Activated T-helper 1 cell treated with anti-CD3 and anti-CD28 coated beads, Interleukin-12 subunit alpha, Interleukin-12 subunit beta, Interleukin-2, Interleukin-4 antibody, amounts not matched to agents 30 ng/mL and 10 ng/mL and 1 ng/mL, durations not matched to agents 14 hours and 24 hours and 36 hours (primary cell): ENCODE measurements at regions of chr17 and their contacts with region 1.

Region 1: DNA sequence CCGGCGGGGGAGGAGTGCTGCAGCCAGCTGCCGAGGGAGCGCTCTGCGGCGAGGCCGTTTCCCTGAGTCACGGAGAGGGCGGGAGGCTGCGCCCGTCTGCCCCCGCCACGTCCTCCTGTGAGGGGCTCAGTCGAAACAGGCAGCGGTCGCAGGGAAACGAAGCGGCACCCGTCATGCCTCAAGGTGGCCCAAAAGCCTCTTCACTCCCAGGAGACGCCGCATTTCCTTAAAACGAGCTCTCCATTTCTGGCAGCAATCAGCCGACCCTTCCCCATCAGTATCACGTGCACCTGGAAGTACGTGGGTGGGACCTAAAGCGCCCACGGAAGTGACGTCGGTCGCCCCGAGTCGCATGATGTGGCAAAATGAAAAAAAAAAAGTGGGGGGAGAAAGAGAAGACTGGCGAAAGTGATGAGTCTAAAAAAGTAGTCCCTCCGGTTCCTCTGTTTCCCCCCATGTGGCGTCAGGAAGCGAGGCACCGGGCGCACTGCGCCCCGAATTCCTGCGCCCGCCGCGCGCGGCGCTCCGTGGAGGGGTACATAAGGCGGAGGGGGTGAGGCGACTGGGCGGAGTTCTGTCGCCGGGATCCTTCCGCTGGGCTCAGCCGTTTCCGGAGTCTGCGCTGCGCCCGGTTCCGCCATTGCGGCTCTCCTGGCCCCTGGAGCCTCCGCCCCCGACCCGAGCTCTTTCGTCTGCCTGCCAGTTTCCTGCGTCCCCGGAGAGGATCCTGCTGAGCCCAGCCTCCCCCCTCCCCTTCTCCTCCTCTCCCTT is at the start of gene CLTC:
- DNase-seq: peak; percentile 90
- H3K4me3 Mint-ChIP-seq: peak within 1 kb of the TSS; percentile 97
- H3K27ac Mint-ChIP-seq: peak within 1 kb of the TSS; percentile 100
- H3K4me1 Mint-ChIP-seq: peaks cover 57% of the 10 kb centered on the region
- H3K27me3 Mint-ChIP-seq: no peaks in the 10 kb centered on the region
- total RNA-seq, gene CLTC: 176 and 186 TPM in 2 replicates

Region 2: GRCh38 chr17:59155439-59156182 is 463.9 kb before region 1 on chr17 and contains the start of gene PRR11:
- intact Hi-C with region 1: loop called (anchors 1 kb)
- DNase-seq: peak; percentile 94
- H3K4me3 Mint-ChIP-seq: no peak within 1 kb of the TSS
- H3K27ac Mint-ChIP-seq: no peak within 1 kb of the TSS
- H3K4me1 Mint-ChIP-seq: peaks cover 63% of the 10 kb centered on the region
- H3K27me3 Mint-ChIP-seq: no peaks in the 10 kb centered on the region
- total RNA-seq, gene PRR11: 29.4 and 32.7 TPM in 2 replicates

Region 3: GRCh38 chr17:59601130-59601529 is 18.3 kb before region 1 on chr17:
- intact Hi-C with region 1: loop called (anchors 2 kb)
- DNase-seq: no peak
- H3K4me3 Mint-ChIP-seq: no peak overlapping the region
- H3K27ac Mint-ChIP-seq: peak overlapping the region; percentile 3
- H3K4me1 Mint-ChIP-seq: peaks cover 14% of the 10 kb centered on the region
- H3K27me3 Mint-ChIP-seq: no peaks in the 10 kb centered on the region

Region 4: DNA sequence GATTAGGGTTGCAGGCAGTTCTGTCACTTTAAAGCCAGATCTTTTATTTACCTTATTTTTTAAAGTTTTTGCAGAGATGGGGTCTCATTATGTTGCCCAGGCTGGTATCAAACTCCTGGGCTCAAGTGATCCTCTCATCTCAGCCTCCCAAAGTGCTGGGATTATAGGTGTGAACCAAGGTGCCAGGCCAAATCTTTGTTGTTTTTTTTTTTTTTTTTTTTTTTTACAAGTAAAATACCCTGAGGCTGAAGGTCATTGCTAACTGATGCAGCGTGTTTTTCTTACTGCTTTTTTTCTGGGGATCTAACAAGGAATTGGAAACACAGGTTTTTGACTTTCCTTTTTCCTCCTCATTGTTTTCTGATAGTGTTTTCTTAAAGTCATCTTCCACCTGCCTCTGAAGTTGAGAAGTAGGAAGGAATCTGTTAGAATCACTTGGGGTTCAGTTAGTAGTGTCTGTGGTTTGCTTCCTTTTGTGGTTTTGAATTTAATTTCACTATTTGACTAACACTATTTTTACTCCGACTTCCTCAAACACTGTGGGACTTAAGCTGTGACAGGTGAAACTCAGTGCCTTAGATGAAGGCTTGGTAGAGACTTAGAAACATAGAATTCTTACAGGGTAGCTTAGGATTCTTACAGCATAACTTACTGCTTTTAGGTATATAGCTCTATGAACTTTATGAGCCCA is 22.5 kb after region 1 on chr17:
- intact Hi-C with region 1: loop called (anchors 1 kb)
- DNase-seq: peak; percentile 3
- H3K4me3 Mint-ChIP-seq: peak overlapping the region; percentile 16
- H3K27ac Mint-ChIP-seq: peak overlapping the region; percentile 72
- H3K4me1 Mint-ChIP-seq: peaks cover 50% of the 10 kb centered on the region
- H3K27me3 Mint-ChIP-seq: no peaks in the 10 kb centered on the region

Region 5: DNA sequence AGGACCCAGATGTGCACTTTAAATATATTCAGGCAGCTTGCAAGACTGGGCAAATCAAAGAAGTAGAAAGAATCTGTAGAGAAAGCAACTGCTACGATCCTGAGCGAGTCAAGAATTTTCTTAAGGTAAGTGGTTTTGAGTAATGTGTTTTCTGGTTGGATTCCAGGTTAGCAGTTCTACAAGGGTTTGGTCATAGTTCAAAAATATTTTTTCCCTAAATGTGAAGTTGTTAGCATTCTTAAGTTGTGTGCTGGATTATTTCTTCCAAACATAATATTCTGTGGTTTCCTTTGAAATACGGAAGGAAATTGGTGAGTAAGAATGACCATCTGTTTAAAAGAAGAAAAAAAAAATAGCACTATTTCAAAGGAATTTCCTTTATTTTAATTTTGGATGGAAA is 49.3 kb after region 1 on chr17:
- intact Hi-C with region 1: no loop called
- DNase-seq: no peak
- H3K4me3 Mint-ChIP-seq: no peak overlapping the region
- H3K27ac Mint-ChIP-seq: peak overlapping the region; percentile 34
- H3K4me1 Mint-ChIP-seq: peaks cover 28% of the 10 kb centered on the region
- H3K27me3 Mint-ChIP-seq: no peaks in the 10 kb centered on the region

Region 6: GRCh38 chr17:59892924-59893676 is 273.6 kb after region 1 on chr17 and contains the starts of genes RPS6KB1 and TUBD1:
- intact Hi-C with region 1: loop called (anchors 1 kb)
- DNase-seq: peak; percentile 98
- H3K4me3 Mint-ChIP-seq: peak within 1 kb of the TSS; percentile 100
- H3K27ac Mint-ChIP-seq: peak within 1 kb of the TSS; percentile 99
- H3K4me1 Mint-ChIP-seq: peaks cover 58% of the 10 kb centered on the region
- H3K27me3 Mint-ChIP-seq: peaks cover 3% of the 10 kb centered on the region
- total RNA-seq, gene RPS6KB1: 67.6 and 82.7 TPM in 2 replicates
- total RNA-seq, gene TUBD1: 12.3 and 13.2 TPM in 2 replicates